Dorsolateral prefrontal cortex (tissue), 120 donors: ENCODE measurements at regions of chr10 and their contacts with region 1.

Region 1: DNA sequence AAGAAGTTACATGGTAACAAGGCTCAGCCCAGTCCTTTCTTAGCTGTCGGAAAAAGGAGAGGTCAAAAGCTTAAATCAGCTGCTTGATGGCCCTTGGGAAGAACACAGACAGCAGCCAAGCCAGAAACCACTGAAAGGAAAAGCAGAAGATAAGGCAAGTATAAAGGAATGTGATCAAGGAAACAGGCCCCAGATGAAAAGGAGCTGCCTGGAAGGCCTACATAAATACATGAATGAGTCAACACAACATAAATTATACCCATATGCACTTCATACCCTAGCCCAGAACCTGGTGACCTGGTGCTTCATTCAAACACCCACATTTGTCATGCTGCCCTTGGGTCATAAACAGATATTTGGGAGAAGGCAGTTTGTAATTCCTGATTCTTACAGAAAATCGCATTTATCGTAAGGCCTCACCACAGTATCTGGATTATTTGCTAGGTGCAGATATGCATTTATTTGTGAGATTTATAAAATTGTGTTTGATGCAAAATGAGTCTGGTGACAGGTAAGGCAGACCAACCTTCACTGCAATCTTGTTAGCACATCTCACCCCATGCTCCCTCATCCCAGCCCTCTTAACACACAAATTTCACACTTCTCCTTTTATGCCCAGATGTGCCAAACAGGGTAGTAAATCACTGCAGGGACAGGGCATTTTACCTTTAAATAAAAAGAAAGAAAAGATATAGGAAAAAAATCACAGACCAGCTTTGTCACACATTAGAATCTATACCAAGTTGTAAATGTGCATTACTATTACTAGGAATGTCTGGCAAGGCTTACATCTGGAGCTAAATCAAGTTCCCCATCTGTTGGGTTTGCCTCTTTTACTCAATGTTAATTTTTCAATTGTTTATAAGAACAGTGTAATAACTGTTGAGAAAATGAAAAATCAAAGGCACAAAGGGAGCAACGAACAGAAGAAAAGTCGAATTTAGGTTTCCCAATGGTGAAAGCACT is 95.0 kb upstream of the KCNIP2 start:
- DNase-seq: no peak
- H3K4me3 ChIP-seq: no peak overlapping the region
- H3K27ac ChIP-seq: peak overlapping the region in 46 of 59 donors; percentile 1 to 77 (median 42)
- H3K27me3 ChIP-seq: no peaks in the 10 kb centered on the region
- CTCF ChIP-seq: no peak

Region 2: GRCh38 chr10:102001435-102002068 is 63.0 kb after region 1 on chr10:
- intact Hi-C with region 1: loop called in 1 of 2 experiments (anchors 5 kb)
- DNase-seq: no peak
- H3K4me3 ChIP-seq: no peak overlapping the region
- H3K27ac ChIP-seq: peak overlapping the region in 6 of 59 donors; percentile 10 to 41 (median 30)
- H3K27me3 ChIP-seq: no peaks in the 10 kb centered on the region
- CTCF ChIP-seq: no peak

Region 3: DNA sequence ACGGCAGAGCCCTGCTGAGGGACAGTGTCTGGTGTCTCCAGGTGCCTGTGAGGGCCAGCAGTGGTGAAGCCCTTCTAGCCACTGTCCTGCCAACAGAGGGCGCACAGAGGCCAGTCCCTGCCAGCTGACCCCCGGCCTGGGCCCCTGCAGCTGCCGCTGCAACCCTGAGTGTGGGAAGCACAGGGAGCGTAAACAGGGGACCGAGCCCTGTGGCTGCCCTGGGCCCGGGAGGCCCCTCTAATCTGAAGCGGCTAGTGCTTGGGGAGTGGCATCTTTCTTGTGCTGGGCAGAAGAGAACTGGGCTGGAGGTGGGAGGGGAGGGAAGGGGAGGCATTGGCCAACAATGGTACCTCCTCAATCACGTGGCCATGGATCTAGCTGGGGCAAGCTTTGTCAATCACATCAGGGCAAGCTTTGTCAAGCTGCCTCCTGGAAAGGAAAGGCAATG is 740.3 kb after region 1 on chr10:
- intact Hi-C with region 1: no loop called
- DNase-seq: peak in 9 of 10 donors; percentile 68 to 85 (median 73)
- H3K4me3 ChIP-seq: peak overlapping the region in 40 of 59 donors; percentile 2 to 54 (median 34)
- H3K27ac ChIP-seq: peak overlapping the region; percentile 54 to 96 (median 86)
- H3K27me3 ChIP-seq: no peaks in the 10 kb centered on the region
- CTCF ChIP-seq: peak; percentile 29 to 85 (median 71)